Vagina (tissue), 2 donors: ENCODE measurements at regions of chr17 and their contacts with region 1.

Region 1: GRCh38 chr17:52106638-52107261 is 51.8 kb downstream of the CA10 start:
- DNase-seq: no peak
- H3K4me3 ChIP-seq: no peak overlapping the region
- H3K27ac ChIP-seq: no peak overlapping the region
- H3K4me1 ChIP-seq: no peaks in the 10 kb centered on the region
- H3K27me3 ChIP-seq: no peaks in the 10 kb centered on the region
- CTCF ChIP-seq: peak; percentile 22 to 57 (median 32)
- POLR2A ChIP-seq: no peak

Region 2: DNA sequence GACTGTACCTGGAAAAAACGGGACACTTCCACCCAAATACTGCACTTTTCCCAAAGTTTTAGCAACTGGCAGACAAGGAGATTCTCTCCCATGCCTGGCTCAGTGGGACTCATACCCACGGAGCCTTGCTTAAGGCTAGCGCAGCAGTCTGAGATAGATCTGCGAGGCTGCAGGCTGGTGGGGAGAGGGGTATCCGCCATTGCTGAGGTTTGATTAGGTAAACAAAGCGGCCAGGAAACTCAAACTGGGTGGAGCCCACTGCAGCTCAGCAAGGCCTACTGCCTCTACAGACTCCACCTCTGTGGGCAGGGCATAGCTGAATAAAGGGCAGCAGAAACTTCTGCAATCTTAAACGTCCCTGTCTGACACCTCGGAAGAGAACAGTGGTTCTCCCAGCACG is 801.6 kb before region 1 on chr17:
- intact Hi-C with region 1: loop called (anchors 10 kb)
- DNase-seq: no peak
- H3K4me3 ChIP-seq: no peak overlapping the region
- H3K27ac ChIP-seq: no peak overlapping the region
- H3K4me1 ChIP-seq: no peaks in the 10 kb centered on the region
- H3K27me3 ChIP-seq: no peaks in the 10 kb centered on the region
- CTCF ChIP-seq: no peak
- POLR2A ChIP-seq: no peak

Region 3: GRCh38 chr17:51908840-51909537 is 197.8 kb before region 1 on chr17:
- intact Hi-C with region 1: loop called (anchors 10 kb)
- DNase-seq: no peak
- H3K4me3 ChIP-seq: no peak overlapping the region
- H3K27ac ChIP-seq: no peak overlapping the region
- H3K4me1 ChIP-seq: no peaks in the 10 kb centered on the region
- H3K27me3 ChIP-seq: no peaks in the 10 kb centered on the region
- CTCF ChIP-seq: no peak
- POLR2A ChIP-seq: no peak